Dendritic cell treated with granulocyte-macrophage colony-stimulating factor and Interleukin-4, amounts not matched to agents 40 ng/mL and 50 ng/mL, for 4 days (primary cell): ENCODE measurements at regions of chr2 and their contacts with region 1.

Region 1: DNA sequence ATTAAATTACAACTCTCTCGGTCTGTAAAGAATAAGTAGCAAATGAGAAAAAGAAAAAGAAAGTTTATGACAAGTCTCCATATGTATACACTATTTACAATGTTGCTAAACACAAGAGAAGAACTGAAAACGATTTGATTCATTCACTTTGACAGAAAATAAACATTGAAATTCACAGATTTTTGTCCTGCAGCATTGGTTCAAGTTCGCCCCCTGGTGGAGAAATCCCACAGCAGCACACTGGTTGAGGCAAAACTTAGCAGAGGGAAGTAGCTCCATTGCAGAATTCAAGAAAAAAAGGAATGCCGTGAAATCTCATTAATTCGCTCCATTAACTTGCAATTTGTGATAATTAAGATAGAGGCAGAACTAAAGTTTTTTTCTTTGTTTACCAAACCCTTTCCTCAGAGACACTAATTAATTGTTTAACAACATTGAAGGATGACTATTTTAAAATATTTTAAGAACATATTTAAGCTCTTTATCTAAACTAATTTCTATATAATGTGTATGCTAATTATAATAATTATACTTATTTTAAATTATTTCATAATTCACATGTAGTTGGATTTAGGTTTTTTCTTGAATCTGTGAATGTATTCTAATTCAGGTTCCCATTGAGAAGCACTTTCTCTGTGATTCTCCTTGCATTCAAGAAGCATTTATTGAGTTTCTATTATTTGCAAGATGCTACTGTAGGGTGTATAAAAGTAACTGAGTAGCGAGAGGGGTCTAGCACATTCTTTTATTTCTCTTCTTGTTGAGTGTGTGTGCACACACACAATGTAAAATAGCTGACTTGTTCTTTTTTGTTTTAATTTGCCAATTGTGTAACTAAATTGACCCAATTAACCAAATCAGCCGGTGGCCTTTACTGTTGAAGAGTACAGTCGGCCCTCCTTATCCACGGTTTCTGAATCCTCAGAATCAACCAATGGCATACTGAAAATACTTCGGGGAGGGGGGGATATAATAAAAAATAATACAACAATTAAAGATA is 74.1 kb downstream of the COL4A3 start:
- H3K4me3 Mint-ChIP-seq: no peak overlapping the region
- H3K27ac Mint-ChIP-seq: no peak overlapping the region
- H3K4me1 Mint-ChIP-seq: no peaks in the 10 kb centered on the region
- H3K27me3 Mint-ChIP-seq: peaks cover 6% of the 10 kb centered on the region

Region 2: DNA sequence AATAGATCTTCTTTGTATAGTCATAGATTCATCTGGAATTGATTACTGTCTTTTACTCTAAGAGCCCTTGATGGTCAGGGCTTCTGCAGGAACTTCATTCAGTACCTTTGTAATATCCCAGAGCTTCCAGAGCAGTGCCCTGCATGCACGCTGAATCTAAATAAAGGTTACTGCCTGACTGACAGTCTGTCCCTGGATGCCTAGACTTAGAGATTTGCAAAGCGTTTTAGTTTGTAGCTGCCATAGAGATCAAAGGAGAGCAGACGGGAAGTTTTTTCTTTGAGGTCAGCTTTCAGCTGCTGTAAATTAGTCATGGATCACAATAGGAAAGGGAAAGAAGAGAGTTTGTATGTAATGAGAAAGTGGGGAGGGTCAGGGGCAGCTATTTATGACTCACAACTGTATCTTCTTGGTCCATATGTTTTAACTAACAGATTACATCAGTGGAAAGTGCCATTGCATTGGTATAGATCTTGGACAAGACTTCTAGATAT is 1884.2 kb before region 1 on chr2:
- intact Hi-C with region 1: no loop called
- H3K4me3 Mint-ChIP-seq: no peak overlapping the region
- H3K27ac Mint-ChIP-seq: no peak overlapping the region
- H3K4me1 Mint-ChIP-seq: peaks cover 6% of the 10 kb centered on the region
- H3K27me3 Mint-ChIP-seq: no peaks in the 10 kb centered on the region

Region 3: GRCh38 chr2:227125506-227125905 is 113.0 kb before region 1 on chr2:
- intact Hi-C with region 1: loop called (anchors 2 kb)
- H3K4me3 Mint-ChIP-seq: no peak overlapping the region
- H3K27ac Mint-ChIP-seq: no peak overlapping the region
- H3K4me1 Mint-ChIP-seq: no peaks in the 10 kb centered on the region
- H3K27me3 Mint-ChIP-seq: peaks cover 10% of the 10 kb centered on the region

Region 4: GRCh38 chr2:227347117-227347516 is 108.6 kb after region 1 on chr2:
- intact Hi-C with region 1: no loop called
- H3K4me3 Mint-ChIP-seq: no peak overlapping the region
- H3K27ac Mint-ChIP-seq: no peak overlapping the region
- H3K4me1 Mint-ChIP-seq: no peaks in the 10 kb centered on the region
- H3K27me3 Mint-ChIP-seq: no peaks in the 10 kb centered on the region

Region 5: DNA sequence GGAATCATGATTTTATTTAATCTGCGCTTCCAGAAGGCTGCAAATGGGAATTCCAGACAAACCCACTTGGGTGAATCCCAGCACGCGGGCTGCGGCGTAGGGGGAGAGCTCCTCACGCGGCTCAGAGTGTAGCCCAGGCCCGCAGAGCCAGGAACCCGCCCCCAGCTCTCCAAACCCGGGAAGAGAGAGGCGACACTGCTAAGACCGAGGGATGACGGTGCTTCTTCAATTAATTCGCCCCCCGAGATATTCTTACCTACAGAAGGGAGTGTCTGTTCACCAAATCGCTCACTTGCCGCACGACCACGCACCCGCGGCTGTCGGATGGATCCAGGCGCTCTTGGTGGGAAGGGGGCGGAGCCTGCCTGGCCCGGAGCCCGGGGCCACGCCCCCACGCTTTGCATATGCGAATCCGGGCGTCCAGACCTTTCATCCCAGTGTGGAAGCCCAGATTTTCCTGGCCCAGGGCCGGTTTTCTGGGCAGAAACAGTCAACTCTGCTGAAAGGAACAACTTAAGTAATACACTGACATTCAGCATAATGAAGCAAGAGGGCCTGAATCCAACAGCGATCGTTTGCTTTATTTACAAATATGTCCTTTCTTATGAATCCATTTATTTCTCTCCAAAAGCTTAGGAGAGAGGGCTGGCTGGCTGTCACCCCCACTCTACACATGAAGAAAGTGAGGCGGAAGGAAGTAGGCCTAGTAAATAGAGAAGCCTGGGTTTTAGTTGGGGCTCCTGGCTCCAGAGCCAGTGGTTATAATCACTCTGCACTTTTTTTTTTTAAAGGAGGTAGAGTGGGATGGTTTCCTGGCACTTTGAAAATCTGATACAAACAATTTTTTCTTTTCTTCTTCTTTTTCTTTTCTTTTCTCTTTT is 479.4 kb after region 1 on chr2 and contains the start of gene SLC19A3:
- intact Hi-C with region 1: no loop called
- H3K4me3 Mint-ChIP-seq: peak within 1 kb of the TSS; percentile 14
- H3K27ac Mint-ChIP-seq: no peak within 1 kb of the TSS
- H3K4me1 Mint-ChIP-seq: peaks cover 5% of the 10 kb centered on the region
- H3K27me3 Mint-ChIP-seq: peaks cover 28% of the 10 kb centered on the region